MCF 10A (cell line): ENCODE measurements at regions of chr12 and their contacts with region 1.

Region 1: GRCh38 chr12:56158029-56158925 is at the start of gene MYL6:
- DNase-seq: peak; percentile 98
- H3K4me3 Mint-ChIP-seq: peak within 1 kb of the TSS; percentile 97
- H3K27ac Mint-ChIP-seq: peak within 1 kb of the TSS; percentile 100
- H3K4me1 Mint-ChIP-seq: peaks cover 35% of the 10 kb centered on the region
- H3K27me3 Mint-ChIP-seq: no peaks in the 10 kb centered on the region
- CTCF ChIP-seq: no peak
- total RNA-seq, gene MYL6: 716 and 997 TPM in 2 replicates

Region 2: GRCh38 chr12:56097738-56098137 is 60.5 kb before region 1 on chr12:
- CTCF ChIA-PET with region 1: no interaction called
- POLR2A ChIA-PET with region 1: no interaction called
- intact Hi-C with region 1: no loop called
- DNase-seq: no peak
- H3K4me3 Mint-ChIP-seq: no peak overlapping the region
- H3K27ac Mint-ChIP-seq: no peak overlapping the region
- H3K4me1 Mint-ChIP-seq: no peaks in the 10 kb centered on the region
- H3K27me3 Mint-ChIP-seq: no peaks in the 10 kb centered on the region
- CTCF ChIP-seq: no peak

Region 3: DNA sequence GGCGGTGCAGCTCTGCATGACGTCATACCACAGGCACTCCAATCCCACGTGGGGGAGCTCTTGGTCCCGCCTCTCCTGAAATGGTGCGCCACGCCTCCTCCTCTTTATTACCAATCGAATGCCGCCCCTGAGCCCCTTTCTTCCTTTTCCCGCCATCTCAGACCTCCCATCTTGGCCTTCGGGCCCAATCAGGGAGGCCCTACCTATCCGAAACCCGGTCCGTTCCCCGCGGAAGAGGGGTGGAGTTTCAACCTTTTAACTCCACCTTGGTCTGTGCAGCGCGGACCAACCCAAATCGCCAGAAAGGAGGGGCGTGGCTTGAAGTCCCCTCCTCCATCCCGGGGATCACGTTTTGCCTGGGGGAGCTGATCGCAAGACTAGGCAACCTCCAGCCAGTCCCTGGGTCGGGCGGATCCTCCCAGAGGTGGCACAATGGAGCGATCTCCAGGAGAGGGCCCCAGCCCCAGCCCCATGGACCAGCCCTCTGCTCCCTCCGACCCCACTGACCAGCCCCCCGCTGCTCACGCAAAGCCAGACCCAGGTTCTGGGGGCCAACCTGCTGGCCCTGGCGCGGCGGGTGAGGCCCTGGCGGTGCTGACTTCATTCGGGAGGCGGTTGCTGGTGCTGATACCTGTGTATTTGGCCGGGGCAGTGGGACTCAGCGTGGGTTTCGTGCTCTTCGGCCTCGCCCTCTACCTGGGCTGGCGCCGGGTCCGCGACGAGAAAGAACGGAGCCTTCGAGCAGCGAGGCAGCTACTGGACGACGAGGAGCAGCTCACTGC is 30.2 kb before region 1 on chr12 and contains the start of gene ESYT1:
- CTCF ChIA-PET with region 1: interaction called, 15 read pairs
- POLR2A ChIA-PET with region 1: interaction called, 146 read pairs
- intact Hi-C with region 1: loop called (anchors 1 kb)
- DNase-seq: peak; percentile 100
- H3K4me3 Mint-ChIP-seq: peak within 1 kb of the TSS; percentile 84
- H3K27ac Mint-ChIP-seq: peak within 1 kb of the TSS; percentile 84
- H3K4me1 Mint-ChIP-seq: peaks cover 26% of the 10 kb centered on the region
- H3K27me3 Mint-ChIP-seq: no peaks in the 10 kb centered on the region
- CTCF ChIP-seq: no peak
- total RNA-seq, gene ESYT1: 111 and 123 TPM in 2 replicates

Region 4: DNA sequence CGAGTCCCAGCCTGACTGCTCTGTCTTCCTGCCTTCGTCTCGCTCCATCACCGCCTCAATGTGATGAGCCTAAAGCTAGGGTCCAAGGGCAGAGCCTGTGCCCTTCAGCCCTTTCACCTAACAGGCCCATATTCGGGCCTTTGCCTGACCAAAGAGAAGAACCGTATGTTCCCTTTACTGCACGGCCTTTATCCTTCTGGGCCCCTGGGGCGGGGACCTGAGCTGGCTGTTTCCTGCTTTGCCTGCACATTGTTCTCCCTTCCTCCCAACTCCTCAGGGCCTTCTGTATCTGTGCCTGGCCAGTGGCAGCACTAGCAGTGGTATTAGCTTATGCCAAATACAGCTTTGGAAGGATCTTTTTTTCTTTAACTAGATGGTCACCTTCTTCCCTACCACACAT is 14.4 kb before region 1 on chr12:
- CTCF ChIA-PET with region 1: interaction called, 6 read pairs
- POLR2A ChIA-PET with region 1: interaction called, 10 read pairs
- intact Hi-C with region 1: no loop called
- DNase-seq: no peak
- H3K4me3 Mint-ChIP-seq: no peak overlapping the region
- H3K27ac Mint-ChIP-seq: no peak overlapping the region
- H3K4me1 Mint-ChIP-seq: peaks cover 19% of the 10 kb centered on the region
- H3K27me3 Mint-ChIP-seq: no peaks in the 10 kb centered on the region
- CTCF ChIP-seq: no peak

Region 5: DNA sequence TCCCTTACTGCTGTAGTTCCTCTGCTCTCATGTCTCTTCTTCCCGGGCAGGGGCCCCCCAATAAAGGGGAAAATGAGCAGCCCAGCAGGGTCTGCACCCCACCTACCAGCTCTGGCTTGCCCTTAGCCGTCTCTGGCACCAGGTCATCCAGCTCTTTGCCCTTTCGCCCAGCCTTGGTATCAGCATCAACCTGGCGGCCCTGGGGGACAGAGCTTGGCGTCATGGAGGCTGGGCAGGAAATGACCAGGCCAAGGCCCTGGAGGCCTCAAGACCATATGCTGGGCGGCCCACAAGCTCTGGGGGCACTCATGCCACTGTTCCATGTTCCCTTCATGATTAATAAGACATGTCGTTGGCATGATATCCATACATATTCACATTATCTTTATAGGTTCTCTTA is 14.6 kb after region 1 on chr12:
- CTCF ChIA-PET with region 1: interaction called, 3 read pairs
- POLR2A ChIA-PET with region 1: interaction called, 24 read pairs
- intact Hi-C with region 1: no loop called
- DNase-seq: no peak
- H3K4me3 Mint-ChIP-seq: no peak overlapping the region
- H3K27ac Mint-ChIP-seq: no peak overlapping the region
- H3K4me1 Mint-ChIP-seq: no peaks in the 10 kb centered on the region
- H3K27me3 Mint-ChIP-seq: no peaks in the 10 kb centered on the region
- CTCF ChIP-seq: no peak

Region 6: GRCh38 chr12:56178347-56178746 is 20.1 kb after region 1 on chr12:
- CTCF ChIA-PET with region 1: interaction called, 3 read pairs
- POLR2A ChIA-PET with region 1: interaction called, 16 read pairs
- intact Hi-C with region 1: no loop called
- DNase-seq: no peak
- H3K4me3 Mint-ChIP-seq: no peak overlapping the region
- H3K27ac Mint-ChIP-seq: no peak overlapping the region
- H3K4me1 Mint-ChIP-seq: no peaks in the 10 kb centered on the region
- H3K27me3 Mint-ChIP-seq: no peaks in the 10 kb centered on the region
- CTCF ChIP-seq: no peak

Region 7: GRCh38 chr12:56724972-56725722 is 566.9 kb after region 1 on chr12 and contains the start of gene NACA:
- CTCF ChIA-PET with region 1: no interaction called
- POLR2A ChIA-PET with region 1: no interaction called
- intact Hi-C with region 1: no loop called
- DNase-seq: peak; percentile 97
- H3K4me3 Mint-ChIP-seq: peak within 1 kb of the TSS; percentile 91
- H3K27ac Mint-ChIP-seq: peak within 1 kb of the TSS; percentile 97
- H3K4me1 Mint-ChIP-seq: peaks cover 28% of the 10 kb centered on the region
- H3K27me3 Mint-ChIP-seq: no peaks in the 10 kb centered on the region
- CTCF ChIP-seq: no peak
- total RNA-seq, gene NACA: 1,274 and 1,490 TPM in 2 replicates